ENCODE measurements at regions of chr12 and their contacts with region 1.

Region 1: GRCh38 chr12:16606201-16606849 is 363 bp upstream of the LMO3 start:
- DNase-seq: peak; percentile 35
- H3K4me3 Mint-ChIP-seq: peak overlapping the region; percentile 71
- H3K27ac Mint-ChIP-seq: no peak overlapping the region
- H3K4me1 Mint-ChIP-seq: peaks cover 13% of the 10 kb centered on the region
- H3K27me3 Mint-ChIP-seq: no peaks in the 10 kb centered on the region
- CTCF ChIP-seq: no peak

Region 2: GRCh38 chr12:16347391-16348298 is 258.7 kb before region 1 on chr12 and contains the start of gene MGST1:
- CTCF ChIA-PET with region 1: no interaction called
- POLR2A ChIA-PET with region 1: no interaction called
- intact Hi-C with region 1: loop called (anchors 5 kb)
- DNase-seq: peak; percentile 85
- H3K4me3 Mint-ChIP-seq: peak within 1 kb of the TSS; percentile 85
- H3K27ac Mint-ChIP-seq: peak within 1 kb of the TSS; percentile 94
- H3K4me1 Mint-ChIP-seq: peaks cover 31% of the 10 kb centered on the region
- H3K27me3 Mint-ChIP-seq: no peaks in the 10 kb centered on the region
- CTCF ChIP-seq: no peak
- total RNA-seq, gene MGST1: 375 and 415 TPM in 2 replicates

Measured in MCF 10A (cell line).